Naive thymus-derived CD4-positive, alpha-beta T cell (primary cell): ENCODE measurements at regions of chr22 and their contacts with region 1.

Region 1: GRCh38 chr22:35308480-35309021 is 8.9 kb downstream of the TOM1 start:
- DNase-seq: peak in 7 of 9 donors; percentile 10 to 36 (median 24)
- ATAC-seq: peak; percentile 46
- H3K4me3 ChIP-seq: no peak overlapping the region
- H3K4me3 Mint-ChIP-seq: peak overlapping the region; percentile 21 to 76 (median 61)
- H3K27ac ChIP-seq: peak overlapping the region; percentile 7
- H3K27ac Mint-ChIP-seq: peak overlapping the region; percentile 15 to 94 (median 74)
- H3K4me1 ChIP-seq: peaks cover 36 to 37% of the 10 kb centered on the region in 2 donors
- H3K4me1 Mint-ChIP-seq: peaks cover 55 to 95% (median 87%) of the 10 kb centered on the region in 7 donors
- H3K27me3 ChIP-seq: no peaks in the 10 kb centered on the region
- H3K27me3 Mint-ChIP-seq: no peaks in the 10 kb centered on the region

Region 2: DNA sequence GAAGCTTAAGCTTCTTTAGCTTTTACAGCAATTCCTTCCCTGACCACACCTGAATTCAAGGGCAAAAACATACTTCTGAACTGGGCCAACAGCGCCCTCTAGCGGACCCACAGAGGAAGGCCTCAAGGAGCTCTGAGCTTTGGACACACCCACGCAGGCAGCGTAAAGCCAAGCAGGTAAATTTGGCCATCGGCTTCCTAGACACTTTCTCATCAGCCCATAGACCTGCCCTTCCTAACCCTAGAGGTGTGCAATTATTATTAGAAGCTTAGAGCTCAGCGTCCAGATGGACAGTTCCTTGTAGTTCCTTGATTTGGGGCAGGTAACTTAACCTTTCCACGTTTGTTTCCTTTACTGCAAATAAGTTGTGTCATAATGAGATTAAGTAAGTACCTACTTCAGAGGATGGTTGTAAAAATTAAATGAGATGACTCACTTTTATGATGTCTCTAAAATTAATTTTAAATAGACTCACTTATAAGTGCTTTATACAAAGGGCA is 76.9 kb before region 1 on chr22:
- CTCF ChIA-PET with region 1: no interaction called
- POLR2A ChIA-PET with region 1: no interaction called
- intact Hi-C with region 1: no loop called
- DNase-seq: peak; percentile 49 to 75 (median 64)
- ATAC-seq: peak; percentile 91
- H3K4me3 ChIP-seq: no peak overlapping the region
- H3K4me3 Mint-ChIP-seq: no peak overlapping the region
- H3K27ac ChIP-seq: no peak overlapping the region
- H3K27ac Mint-ChIP-seq: peak overlapping the region in 1 of 9 donors; percentile 20
- H3K4me1 ChIP-seq: no peaks in the 10 kb centered on the region
- H3K4me1 Mint-ChIP-seq: peaks cover 4 to 17% (median 6%) of the 10 kb centered on the region in 7 donors
- H3K27me3 ChIP-seq: no peaks in the 10 kb centered on the region
- H3K27me3 Mint-ChIP-seq: peaks cover 12 to 54% (median 35%) of the 10 kb centered on the region in 5 donors

Region 3: DNA sequence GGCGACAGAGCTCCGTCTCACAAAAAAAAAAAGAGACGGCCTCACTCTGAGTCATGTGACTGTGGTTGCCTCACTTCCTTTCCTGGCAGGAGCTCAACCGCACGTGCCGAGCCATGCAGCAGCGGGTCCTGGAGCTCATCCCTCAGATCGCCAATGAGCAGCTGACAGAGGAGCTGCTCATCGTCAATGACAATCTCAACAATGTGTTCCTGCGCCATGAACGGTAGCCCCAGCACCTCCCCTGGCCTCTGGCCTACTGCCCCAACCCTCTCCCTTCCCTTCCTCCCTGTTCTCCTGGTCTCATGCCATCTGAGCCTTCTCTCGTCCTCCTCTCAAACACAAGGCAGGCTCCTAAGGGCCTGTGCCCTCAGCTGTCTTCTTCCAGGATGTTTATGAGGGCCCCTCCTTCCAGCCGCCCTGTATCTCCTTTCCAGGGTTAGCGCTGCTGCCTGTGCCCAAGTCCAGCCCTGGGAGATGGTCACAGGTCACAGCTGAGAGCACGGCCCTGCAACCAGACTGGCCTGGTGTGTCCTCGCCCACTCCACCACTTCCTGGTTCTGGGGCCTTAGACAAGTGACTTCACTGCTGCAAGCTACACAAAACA is 21.8 kb after region 1 on chr22:
- CTCF ChIA-PET with region 1: interaction called, 6 read pairs
- POLR2A ChIA-PET with region 1: interaction called, 10 read pairs
- intact Hi-C with region 1: no loop called
- DNase-seq: peak in 8 of 9 donors; percentile 33 to 57 (median 46)
- ATAC-seq: peak; percentile 74
- H3K4me3 ChIP-seq: peak overlapping the region; percentile 13
- H3K4me3 Mint-ChIP-seq: peak overlapping the region; percentile 61 to 80 (median 73)
- H3K27ac ChIP-seq: peak overlapping the region; percentile 34
- H3K27ac Mint-ChIP-seq: peak overlapping the region; percentile 84 to 92 (median 90)
- H3K4me1 ChIP-seq: peaks cover 22 to 23% of the 10 kb centered on the region in 2 donors
- H3K4me1 Mint-ChIP-seq: peaks cover 12 to 38% (median 23%) of the 10 kb centered on the region in 7 donors
- H3K27me3 ChIP-seq: no peaks in the 10 kb centered on the region
- H3K27me3 Mint-ChIP-seq: no peaks in the 10 kb centered on the region